Right ventricle myocardium superior (tissue), 1 donor: ENCODE measurements at regions of chr19 and their contacts with region 1.

Region 1: GRCh38 chr19:41570639-41571112 is 5.3 kb upstream of the CEACAM21 start:
- DNase-seq: peak; percentile 92
- ATAC-seq: peak; percentile 94

Region 2: DNA sequence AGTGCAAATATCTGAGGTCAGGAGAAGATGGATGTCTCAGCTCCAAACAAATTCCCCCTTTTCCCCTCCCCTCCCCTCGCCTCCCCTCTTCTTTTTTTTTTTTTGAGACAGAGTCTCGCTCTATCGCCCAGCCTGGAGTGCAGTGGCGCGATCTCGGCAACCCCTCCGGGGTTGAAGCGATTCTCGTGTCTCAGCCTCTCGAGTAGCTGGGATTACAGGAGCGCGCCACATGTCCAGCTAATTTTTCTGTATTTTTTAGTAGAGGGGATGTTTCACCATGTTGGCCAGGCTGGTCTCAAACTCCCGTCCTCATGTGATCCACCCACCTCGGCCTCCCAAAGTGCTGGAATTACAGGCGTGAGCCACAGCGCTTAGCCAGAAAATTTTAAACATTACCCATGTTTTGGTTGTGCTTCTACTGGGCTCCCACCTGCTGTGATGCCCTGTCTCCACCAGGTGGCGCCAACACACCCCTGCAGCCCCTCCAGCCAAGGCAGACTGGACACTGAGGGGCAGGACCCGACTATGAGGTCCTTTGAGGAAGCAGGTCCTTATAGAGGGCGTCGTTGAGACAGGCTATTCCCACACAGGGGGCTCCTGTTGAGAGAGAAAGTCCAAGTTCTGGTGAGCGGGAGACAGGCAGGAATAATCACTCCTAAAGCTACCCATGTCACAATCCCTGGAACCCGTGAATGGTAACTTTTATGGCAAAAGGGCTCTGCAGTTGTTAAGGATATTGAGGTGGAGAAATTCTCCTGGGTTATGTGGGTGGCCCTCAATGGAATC is 121.4 kb before region 1 on chr19:
- intact Hi-C with region 1: loop called (anchors 1 kb)
- DNase-seq: peak; percentile 83
- ATAC-seq: peak; percentile 95

Region 3: GRCh38 chr19:41646589-41647204 is 76.0 kb after region 1 on chr19:
- intact Hi-C with region 1: no loop called
- DNase-seq: no peak
- ATAC-seq: no peak